Activated naive CD4-positive, alpha-beta T cell treated with anti-CD3 and anti-CD28 coated beads for 36 hours (primary cell): ENCODE measurements at regions of chr19 and their contacts with region 1.

Region 1: DNA sequence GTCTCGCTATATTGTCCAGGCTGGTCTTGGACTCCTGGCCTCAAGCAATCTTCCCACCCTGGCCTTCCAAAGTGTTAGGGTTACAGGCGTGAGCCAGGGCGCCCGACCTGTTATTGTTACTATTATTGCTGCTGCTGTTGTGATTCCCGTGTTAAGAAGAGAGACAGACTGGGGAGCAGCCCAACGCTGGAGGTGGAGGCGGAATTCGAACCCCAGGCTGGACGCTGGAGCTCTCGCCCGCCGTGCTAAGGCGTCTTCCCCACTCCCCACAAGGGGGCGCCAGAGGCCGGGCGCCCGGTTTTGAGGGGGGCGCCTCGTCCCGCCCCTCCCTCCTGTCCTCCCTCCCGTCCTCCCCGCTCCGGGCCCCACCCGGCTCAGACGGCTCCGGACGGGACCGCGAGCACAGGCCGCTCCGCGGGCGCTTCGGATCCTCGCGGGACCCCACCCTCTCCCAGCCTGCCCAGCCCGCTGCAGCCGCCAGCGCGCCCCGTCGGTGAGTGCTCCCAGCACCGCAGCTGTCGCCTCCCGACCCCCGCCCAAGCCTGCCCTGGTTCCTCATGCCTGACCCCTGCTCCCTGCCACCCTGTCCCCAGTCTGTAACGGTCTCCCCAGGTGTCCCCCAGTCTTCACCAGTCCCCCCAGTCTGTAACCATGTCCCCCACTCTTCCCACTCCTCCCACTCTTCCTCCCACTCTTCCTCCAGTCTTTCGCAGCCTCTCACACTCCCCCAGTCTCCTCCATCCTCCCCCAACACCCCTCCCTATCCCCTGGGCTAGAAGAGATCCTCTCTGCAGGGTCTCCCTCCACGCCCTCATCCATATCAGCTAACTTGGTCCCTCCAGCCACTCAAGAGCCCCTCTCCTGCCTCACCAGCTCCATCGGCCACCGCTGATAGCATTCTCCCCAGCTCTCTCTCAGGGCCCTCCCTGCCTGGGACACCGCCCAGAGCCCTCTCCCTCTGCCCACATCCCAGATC is at the start of gene EHD2:
- DNase-seq: peak; percentile 47
- H3K4me3 Mint-ChIP-seq: peak within 1 kb of the TSS; percentile 31
- H3K27ac Mint-ChIP-seq: no peak within 1 kb of the TSS
- H3K4me1 Mint-ChIP-seq: peaks cover 7% of the 10 kb centered on the region
- H3K27me3 Mint-ChIP-seq: peaks cover 35% of the 10 kb centered on the region
- total RNA-seq, gene EHD2: 0.27 to 0.41 TPM

Region 2: GRCh38 chr19:47573071-47574026 is 140.0 kb before region 1 on chr19 and contains the start of gene ZNF541:
- CTCF ChIA-PET with region 1: no interaction called
- intact Hi-C with region 1: no loop called
- DNase-seq: peak; percentile 82
- H3K4me3 Mint-ChIP-seq: peak within 1 kb of the TSS; percentile 38
- H3K27ac Mint-ChIP-seq: no peak within 1 kb of the TSS
- H3K4me1 Mint-ChIP-seq: peaks cover 29% of the 10 kb centered on the region
- H3K27me3 Mint-ChIP-seq: no peaks in the 10 kb centered on the region
- total RNA-seq, gene ZNF541: 0.33 to 0.44 TPM

Region 3: DNA sequence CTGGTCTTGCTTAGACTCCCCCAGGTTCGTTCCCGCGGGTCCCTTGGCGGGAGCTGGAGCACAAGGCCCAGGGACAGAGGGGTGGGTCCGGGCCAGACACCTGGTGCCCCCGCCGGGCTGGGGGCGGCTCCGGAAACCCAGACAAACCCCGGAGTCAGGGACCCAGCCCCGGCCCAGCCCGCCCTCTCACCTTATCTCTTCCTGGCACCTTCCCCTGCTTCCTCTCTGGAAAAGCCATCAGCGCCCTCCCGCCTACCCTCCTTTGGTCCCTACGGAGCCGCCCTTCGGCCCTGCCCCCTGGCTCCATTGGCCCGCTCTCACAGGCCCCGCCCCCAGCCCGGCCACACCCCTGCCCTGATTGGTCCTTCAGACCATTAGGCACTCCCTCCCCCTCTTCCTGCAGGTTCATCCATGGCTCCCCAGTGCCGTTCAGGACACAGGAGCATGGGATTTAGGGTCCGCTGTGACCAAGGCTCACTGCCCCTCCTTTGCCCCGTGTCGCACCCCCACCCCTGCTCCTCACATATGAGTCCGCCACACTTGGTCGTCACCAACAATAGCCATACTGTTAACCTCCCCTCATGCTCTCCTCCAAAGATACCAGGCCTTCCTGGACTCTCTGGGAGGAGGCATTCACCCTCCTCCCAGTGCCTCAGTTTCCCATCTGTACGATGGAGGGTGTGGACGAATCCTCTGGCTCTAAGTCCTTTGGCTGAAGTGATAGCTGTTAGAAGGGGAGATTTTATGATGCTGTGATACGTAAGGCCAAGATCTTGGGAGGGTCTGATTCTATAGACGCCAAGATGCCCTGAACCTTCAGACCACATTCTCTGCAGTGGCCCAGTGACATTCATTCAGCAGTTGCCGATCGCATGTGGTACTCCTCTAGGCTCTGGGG is 16.9 kb after region 1 on chr19:
- CTCF ChIA-PET with region 1: interaction called, 25 read pairs
- intact Hi-C with region 1: no loop called
- DNase-seq: peak; percentile 76
- H3K4me3 Mint-ChIP-seq: peak overlapping the region; percentile 75
- H3K27ac Mint-ChIP-seq: no peak overlapping the region
- H3K4me1 Mint-ChIP-seq: peaks cover 14% of the 10 kb centered on the region
- H3K27me3 Mint-ChIP-seq: peaks cover 15% of the 10 kb centered on the region